Right ventricle myocardium inferior (tissue), 1 donor: ENCODE measurements at regions of chr9 and their contacts with region 1.

Region 1: DNA sequence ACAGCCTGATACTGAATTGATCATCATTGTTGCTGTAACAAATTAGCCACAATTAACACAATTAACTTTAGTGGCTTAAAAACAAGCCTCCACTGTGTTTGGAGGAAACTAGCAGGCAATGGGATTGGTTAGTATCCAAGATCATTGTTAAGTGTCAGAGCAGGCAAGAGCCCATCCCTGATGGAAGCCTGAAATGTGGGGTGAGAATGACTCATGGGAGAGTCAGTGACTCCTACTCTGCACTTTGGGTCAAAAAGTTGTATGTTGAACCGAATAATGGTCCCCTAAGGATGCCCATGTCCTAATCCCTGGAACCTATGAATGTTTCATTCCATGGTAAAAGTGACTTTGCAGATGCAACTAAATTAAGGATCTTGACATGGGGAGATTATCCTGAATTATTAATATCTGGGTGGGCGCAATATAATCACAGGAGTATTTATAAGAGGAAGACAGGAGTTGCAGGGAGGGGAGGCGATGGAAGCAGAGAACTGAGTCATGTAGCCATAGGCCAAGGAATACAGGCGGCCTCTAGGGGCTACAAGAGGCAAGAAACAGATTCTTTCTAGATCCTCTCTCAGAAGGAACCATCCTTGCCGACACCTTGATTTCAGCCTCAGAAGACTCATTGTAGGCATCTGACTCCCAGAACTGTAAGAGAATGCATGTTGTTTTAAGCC is 28.8 kb downstream of the ALG2 start:
- DNase-seq: no peak
- ATAC-seq: no peak

Region 2: DNA sequence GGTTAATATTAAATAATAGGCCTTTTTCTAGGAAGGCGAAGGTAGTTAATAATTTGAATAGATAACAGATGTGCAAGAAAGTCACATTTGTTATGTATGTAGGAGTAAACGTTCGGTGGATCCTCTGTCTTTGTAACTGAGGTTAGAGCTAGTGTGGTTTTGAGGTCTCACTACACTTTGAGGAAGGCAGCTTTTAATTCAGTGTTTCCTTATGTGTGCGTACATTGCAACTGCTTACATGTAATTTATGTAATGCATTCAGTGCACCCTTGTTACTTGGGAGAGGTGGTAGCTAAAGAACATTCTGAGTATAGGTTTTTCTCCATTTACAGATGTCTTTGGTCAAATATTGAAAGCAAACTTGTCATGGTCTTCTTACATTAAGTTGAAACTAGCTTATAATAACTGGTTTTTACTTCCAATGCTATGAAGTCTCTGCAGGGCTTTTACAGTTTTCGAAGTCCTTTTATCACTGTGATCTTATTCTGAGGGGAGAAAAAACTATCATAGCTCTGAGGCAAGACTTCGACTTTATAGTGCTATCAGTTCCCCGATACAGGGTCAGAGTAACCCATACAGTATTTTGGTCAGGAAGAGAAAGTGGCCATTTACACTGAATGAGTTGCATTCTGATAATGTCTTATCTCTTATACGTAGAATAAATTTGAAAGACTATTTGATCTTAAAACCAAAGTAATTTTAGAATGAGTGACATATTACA is 42.3 kb before region 1 on chr9:
- intact Hi-C with region 1: loop called (anchors 2 kb)
- DNase-seq: no peak
- ATAC-seq: no peak